A549 (cell line): ENCODE measurements at regions of chr7 and their contacts with region 1.

Region 1: DNA sequence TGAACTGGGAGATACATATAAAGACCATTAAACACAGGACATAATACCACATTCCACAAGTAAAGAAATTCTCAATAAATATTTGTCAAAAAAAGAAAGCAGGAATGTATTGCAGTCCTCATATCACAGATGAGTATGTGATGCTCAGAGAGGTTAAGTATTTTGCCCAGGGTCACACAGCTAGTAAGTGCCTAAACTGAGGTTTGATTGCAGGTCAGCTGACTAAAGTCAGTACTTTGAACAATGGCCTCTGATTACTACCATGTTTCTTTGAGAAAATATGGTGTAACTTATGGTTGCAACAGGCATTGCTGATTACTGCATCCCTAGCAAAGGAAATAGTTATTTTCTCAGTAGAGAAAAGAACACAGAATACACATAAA is 267.1 kb downstream of the ELMO1 start:
- DNase-seq: no peak
- ATAC-seq: no peak
- H3K4me3 ChIP-seq: no peak overlapping the region
- H3K27ac ChIP-seq: no peak overlapping the region
- H3K4me1 ChIP-seq: no peaks in the 10 kb centered on the region
- CTCF ChIP-seq: no peak
- EP300 ChIP-seq: no peak
- POLR2A ChIP-seq: no peak
- RAD21 ChIP-seq: no peak

Region 2: DNA sequence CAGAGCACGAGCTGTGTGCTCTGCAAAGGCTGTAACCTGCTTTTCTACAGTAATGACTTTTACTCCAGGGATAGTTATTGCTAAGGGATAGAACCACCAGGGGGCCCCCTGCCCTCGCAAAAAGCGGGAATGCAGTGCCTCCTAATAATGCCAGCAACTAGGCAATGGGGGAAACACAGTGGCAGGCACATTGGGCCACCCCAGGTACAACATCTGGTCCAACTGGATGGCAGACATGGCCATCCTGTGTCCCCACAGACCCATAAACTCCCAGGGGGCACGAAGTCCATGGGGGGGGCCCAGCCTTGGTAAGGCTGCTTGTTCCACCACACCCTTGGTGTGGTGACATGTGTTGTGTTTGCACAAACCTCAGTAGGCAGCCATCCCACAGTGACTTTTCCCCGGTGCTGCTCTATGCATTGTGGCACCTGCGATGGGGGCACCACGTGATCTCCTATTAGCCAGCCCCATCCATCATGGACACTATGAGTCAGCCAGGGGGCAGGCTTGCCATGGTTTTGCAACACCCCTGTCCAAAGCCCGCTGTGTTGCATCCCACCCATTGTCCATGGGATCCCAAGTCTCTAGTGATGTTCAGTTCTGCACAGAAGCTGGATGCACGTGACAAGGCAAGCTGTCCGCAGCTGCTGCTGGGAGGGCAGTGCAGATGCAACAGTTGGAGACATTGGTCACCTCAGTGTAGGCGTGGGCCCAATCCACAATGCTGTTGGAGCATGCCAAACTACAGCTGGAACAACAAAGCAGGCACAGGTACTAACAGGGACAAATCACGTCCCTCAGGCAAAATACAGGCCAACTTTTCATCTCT is 707.9 kb before region 1 on chr7:
- CTCF ChIA-PET with region 1: interaction called, 13 read pairs
- POLR2A ChIA-PET with region 1: no interaction called
- DNase-seq: peak; percentile 28 to 38
- ATAC-seq: peak; percentile 85 to 91
- H3K4me3 ChIP-seq: no peak overlapping the region
- H3K27ac ChIP-seq: no peak overlapping the region
- H3K4me1 ChIP-seq: peaks cover 7% of the 10 kb centered on the region; the same call in 1 of the 3 replicates
- CTCF ChIP-seq: peak; percentile 63
- EP300 ChIP-seq: no peak
- POLR2A ChIP-seq: no peak
- RAD21 ChIP-seq: peak; percentile 80 to 93

Region 3: DNA sequence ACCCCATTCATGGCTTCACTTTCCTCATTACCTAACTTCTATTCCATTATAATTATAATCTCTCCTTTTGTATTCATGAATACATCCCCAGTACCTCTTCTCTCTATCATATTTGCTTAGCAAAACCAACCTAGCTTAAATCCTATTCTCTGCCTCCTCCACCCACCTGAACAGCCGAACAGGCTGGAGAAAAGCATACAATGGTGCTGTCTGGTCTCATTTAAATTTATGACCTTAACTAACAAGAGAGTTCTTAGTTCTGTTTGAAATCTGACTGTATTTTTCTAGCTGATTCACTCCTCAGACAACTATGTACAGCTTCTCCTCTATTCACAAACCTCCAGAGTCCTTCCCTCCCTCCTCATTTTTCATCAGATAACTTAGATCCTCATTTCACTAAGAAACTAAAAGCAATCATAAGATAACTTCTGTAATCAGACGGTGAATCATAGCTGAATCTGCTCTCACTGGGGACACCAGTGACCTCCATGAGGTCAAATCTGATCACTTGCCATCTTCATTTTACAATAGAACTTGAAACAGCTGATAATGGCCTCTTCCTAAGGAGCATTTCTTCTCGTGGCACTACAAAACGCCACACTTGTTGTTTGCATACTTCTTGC is 223.3 kb before region 1 on chr7:
- CTCF ChIA-PET with region 1: interaction called, 25 read pairs
- POLR2A ChIA-PET with region 1: no interaction called
- DNase-seq: no peak
- ATAC-seq: no peak
- H3K4me3 ChIP-seq: no peak overlapping the region
- H3K27ac ChIP-seq: no peak overlapping the region
- H3K4me1 ChIP-seq: no peaks in the 10 kb centered on the region; the same call in 2 of the 3 replicates
- CTCF ChIP-seq: no peak
- EP300 ChIP-seq: no peak
- POLR2A ChIP-seq: no peak
- RAD21 ChIP-seq: no peak

Region 4: GRCh38 chr7:36986429-36987362 is 194.8 kb before region 1 on chr7:
- CTCF ChIA-PET with region 1: interaction called, 143 read pairs
- POLR2A ChIA-PET with region 1: no interaction called
- DNase-seq: peak; percentile 57 to 75
- ATAC-seq: peak; percentile 78 to 90
- H3K4me3 ChIP-seq: no peak overlapping the region
- H3K27ac ChIP-seq: no peak overlapping the region
- H3K4me1 ChIP-seq: no peaks in the 10 kb centered on the region
- CTCF ChIP-seq: peak; percentile 68
- EP300 ChIP-seq: no peak
- POLR2A ChIP-seq: no peak
- RAD21 ChIP-seq: peak; percentile 72 to 82

Region 5: GRCh38 chr7:37160656-37161055 is 20.9 kb before region 1 on chr7:
- CTCF ChIA-PET with region 1: interaction called, 11 read pairs
- POLR2A ChIA-PET with region 1: no interaction called
- DNase-seq: no peak
- ATAC-seq: no peak
- H3K4me3 ChIP-seq: no peak overlapping the region
- H3K27ac ChIP-seq: no peak overlapping the region
- H3K4me1 ChIP-seq: no peaks in the 10 kb centered on the region
- CTCF ChIP-seq: no peak
- EP300 ChIP-seq: no peak
- POLR2A ChIP-seq: no peak
- RAD21 ChIP-seq: no peak